HEK293 (cell line): ENCODE measurements at regions of chr1 and their contacts with region 1.

Region 1: DNA sequence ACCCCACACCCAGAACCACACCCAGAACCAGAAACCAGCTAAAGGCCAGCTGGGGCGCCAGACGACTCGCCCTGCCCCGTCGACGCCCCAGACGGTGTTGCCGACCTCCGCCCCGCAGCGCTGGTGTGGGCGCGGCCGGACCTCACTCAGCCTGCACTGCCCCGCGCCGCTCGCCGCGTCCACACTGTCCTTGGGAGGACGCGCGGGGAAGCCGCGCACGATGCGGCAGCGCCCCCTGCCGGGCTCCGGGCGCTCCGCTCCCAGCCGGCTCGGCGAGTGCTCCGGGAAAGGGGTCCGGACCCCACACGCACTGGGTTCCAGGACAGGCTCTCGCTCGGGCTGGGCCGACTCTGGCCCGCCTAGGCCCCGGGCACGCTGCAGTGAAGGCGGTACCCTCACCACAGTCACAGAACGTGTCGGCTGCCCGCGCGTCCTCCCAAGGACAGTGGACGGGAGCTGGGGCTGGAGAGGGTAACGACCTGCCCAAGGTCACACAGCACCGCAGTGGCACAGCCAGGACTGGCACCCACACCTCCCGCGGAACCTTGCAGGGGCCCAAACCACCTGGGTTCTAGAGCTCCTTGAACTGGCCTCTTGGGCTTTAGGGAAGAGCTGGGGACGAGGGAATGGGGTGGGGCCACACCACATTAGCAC is 90.2 kb downstream of the DMRTA2 start:
- H3K4me3 ChIP-seq: peak overlapping the region; percentile 44
- H3K27ac ChIP-seq: no peak overlapping the region
- H3K4me1 ChIP-seq: no peaks in the 10 kb centered on the region
- CTCF ChIP-seq: peak; percentile 85

Region 2: GRCh38 chr1:50193002-50193401 is 140.1 kb before region 1 on chr1:
- CTCF ChIA-PET with region 1: no interaction called
- POLR2A ChIA-PET with region 1: no interaction called
- H3K4me3 ChIP-seq: no peak overlapping the region
- H3K27ac ChIP-seq: no peak overlapping the region
- H3K4me1 ChIP-seq: no peaks in the 10 kb centered on the region
- CTCF ChIP-seq: no peak

Region 3: DNA sequence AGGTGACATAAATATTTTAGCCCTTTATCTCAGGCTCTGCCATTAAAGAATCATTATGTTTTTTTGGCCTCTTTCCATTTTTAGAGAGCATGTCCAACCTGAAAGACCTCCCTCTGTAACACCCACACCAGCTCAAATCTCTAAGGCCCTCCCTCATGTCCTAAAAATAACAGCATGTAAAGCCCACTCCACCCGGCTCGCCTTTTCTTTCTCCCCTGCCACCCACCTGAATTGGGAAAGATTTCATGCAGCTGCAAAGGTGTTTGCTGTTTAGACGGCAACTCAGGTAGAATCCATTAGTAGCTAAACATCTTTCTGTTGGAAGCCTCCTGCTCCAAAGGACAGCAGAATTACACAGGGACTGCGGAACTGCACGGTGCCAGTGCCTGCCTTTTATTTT is 10.3 kb after region 1 on chr1:
- CTCF ChIA-PET with region 1: interaction called, 36 read pairs
- POLR2A ChIA-PET with region 1: no interaction called
- H3K4me3 ChIP-seq: no peak overlapping the region
- H3K27ac ChIP-seq: no peak overlapping the region
- H3K4me1 ChIP-seq: no peaks in the 10 kb centered on the region
- CTCF ChIP-seq: no peak

Region 4: GRCh38 chr1:50348449-50349241 is 15.6 kb after region 1 on chr1:
- CTCF ChIA-PET with region 1: interaction called, 36 read pairs
- POLR2A ChIA-PET with region 1: no interaction called
- H3K4me3 ChIP-seq: no peak overlapping the region
- H3K27ac ChIP-seq: no peak overlapping the region
- H3K4me1 ChIP-seq: no peaks in the 10 kb centered on the region
- CTCF ChIP-seq: peak; percentile 65

Region 5: DNA sequence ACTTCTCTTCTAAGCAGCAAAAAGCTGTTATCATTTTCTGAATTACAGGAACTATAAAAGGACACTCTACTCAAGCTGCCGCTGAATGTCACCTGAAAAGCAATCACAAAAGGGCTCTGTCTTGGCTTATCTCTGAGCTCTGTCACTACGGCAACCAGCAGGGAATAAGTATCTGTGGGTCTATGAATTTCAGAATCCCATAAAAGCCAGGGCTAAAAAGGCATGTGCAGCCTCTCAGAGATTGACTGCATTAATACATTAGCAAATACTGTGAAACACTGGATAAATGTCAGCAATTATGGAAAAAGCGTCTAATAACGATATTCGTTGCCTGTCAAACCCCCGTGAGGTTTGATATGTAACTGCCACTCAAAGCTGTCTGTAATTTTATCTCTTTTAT is 300.4 kb after region 1 on chr1:
- CTCF ChIA-PET with region 1: no interaction called
- POLR2A ChIA-PET with region 1: no interaction called
- H3K4me3 ChIP-seq: no peak overlapping the region
- H3K27ac ChIP-seq: no peak overlapping the region
- H3K4me1 ChIP-seq: no peaks in the 10 kb centered on the region
- CTCF ChIP-seq: no peak